Caco-2 (cell line): ENCODE measurements at regions of chr17 and their contacts with region 1.

Region 1: DNA sequence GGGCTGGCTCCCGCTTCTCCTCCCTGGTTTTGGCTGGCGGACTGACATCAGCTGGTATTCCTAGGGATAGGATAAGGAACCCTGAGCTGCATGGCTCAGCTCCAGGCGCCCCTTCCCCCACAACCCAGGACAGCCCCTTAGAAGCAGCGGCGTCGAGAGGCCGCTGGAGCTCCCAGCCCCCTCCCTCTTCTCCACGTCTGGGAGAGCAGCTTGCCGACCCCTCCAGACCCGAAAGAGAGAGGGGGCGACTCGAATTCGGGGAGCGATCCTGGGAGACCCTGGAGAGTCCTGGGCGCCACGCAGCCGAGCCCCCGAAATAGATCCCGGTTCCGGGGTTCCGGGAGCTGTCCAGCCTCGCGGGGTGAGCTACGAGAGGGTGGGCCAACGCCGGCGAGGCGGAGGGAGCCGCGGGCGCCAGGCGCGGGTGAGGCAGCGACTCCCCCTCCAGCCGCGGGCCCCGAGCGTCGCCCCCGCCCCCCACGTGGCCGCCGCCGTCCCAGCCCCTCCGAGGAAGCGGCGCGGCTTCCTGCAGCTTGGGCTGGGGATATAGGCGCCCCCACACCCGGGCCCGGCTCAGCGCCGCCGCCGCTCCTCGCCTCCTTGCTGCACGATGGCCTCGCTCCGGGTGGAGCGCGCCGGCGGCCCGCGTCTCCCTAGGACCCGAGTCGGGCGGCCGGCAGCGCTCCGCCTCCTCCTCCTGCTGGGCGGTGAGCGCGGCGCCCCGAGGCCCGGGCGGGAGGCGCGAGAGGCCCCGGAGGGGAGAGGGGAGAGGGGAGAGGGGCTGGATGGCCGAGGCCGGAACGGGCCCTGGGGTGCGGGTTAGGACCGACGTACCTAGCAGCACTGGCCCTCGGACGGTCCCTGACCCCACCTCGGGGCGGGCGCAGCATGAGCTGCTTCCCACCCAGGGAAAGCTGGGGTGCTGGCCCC is at the start of gene RAMP2:
- DNase-seq: peak; percentile 49 to 72
- H3K4me3 ChIP-seq: peak within 1 kb of the TSS; percentile 68
- H3K4me3 Mint-ChIP-seq: peak within 1 kb of the TSS; percentile 65
- H3K27ac Mint-ChIP-seq: peak within 1 kb of the TSS; percentile 56
- H3K4me1 ChIP-seq: peaks cover 28% of the 10 kb centered on the region
- H3K4me1 Mint-ChIP-seq: peaks cover 19% of the 10 kb centered on the region
- H3K27me3 ChIP-seq: no peaks in the 10 kb centered on the region
- H3K27me3 Mint-ChIP-seq: no peaks in the 10 kb centered on the region
- CTCF ChIP-seq: no peak
- total RNA-seq, gene RAMP2: 21.4 and 24.3 TPM in 2 replicates

Region 2: GRCh38 chr17:42577532-42578281 is 183.2 kb before region 1 on chr17 and contains the start of gene PSMC3IP:
- CTCF ChIA-PET with region 1: interaction called, 27 read pairs
- POLR2A ChIA-PET with region 1: interaction called, 4 read pairs
- intact Hi-C with region 1: loop called (anchors 5 kb)
- DNase-seq: peak; percentile 95 to 97
- H3K4me3 ChIP-seq: peak within 1 kb of the TSS; percentile 82
- H3K4me3 Mint-ChIP-seq: peak within 1 kb of the TSS; percentile 80
- H3K27ac Mint-ChIP-seq: peak within 1 kb of the TSS; percentile 84
- H3K4me1 ChIP-seq: peaks cover 4% of the 10 kb centered on the region
- H3K4me1 Mint-ChIP-seq: peaks cover 23% of the 10 kb centered on the region
- H3K27me3 ChIP-seq: no peaks in the 10 kb centered on the region
- H3K27me3 Mint-ChIP-seq: no peaks in the 10 kb centered on the region
- CTCF ChIP-seq: peak; percentile 59 to 64
- total RNA-seq, gene PSMC3IP: 24.7 and 25.2 TPM in 2 replicates

Region 3: DNA sequence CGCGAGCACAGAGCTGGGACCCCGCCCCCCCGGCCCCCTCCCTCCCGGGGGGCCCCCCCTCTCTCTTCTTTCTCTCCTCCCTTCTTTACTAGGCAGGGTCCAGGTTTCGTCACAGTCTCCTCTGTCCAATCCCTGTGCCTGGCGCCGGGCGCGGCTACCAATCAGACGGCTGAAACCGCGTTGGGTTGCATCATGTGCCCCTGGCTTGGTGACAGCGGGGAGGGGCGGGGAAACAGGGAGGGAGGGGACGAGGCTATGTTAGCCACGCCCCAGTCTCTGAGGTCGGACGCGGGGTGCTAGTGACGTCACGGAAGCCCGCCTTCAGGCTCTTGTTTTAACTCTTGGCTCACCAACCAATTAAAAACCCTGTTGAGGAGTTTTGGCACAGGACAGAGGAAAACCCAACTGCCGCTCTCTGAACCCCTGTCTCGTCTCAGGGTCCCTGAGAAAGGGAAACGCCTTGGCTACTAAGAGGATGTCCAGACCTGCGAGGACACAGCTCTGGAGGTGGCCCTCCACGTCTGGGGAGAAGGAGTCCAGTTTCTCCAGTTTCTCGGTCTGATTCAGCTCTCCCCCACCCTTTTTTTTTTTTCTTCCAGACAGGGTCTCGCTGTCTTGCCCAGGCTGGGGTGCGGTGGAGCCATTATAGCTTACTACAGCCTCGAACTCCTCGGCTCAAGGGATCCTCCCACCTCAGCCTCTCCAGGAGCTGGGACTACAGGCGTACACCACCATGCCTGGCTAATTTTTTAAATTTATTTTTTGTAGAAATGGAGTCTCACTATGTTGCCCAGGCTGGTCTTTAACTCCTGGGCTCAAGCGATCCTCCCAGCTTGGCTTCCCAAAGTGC is 83.7 kb before region 1 on chr17:
- CTCF ChIA-PET with region 1: interaction called, 5 read pairs
- POLR2A ChIA-PET with region 1: interaction called, 4 read pairs
- intact Hi-C with region 1: loop called (anchors 5 kb)
- DNase-seq: peak; percentile 99 to 100
- H3K4me3 ChIP-seq: peak overlapping the region; percentile 85
- H3K4me3 Mint-ChIP-seq: peak overlapping the region; percentile 89
- H3K27ac Mint-ChIP-seq: peak overlapping the region; percentile 95
- H3K4me1 ChIP-seq: peaks cover 26% of the 10 kb centered on the region
- H3K4me1 Mint-ChIP-seq: peaks cover 8% of the 10 kb centered on the region
- H3K27me3 ChIP-seq: no peaks in the 10 kb centered on the region
- H3K27me3 Mint-ChIP-seq: no peaks in the 10 kb centered on the region
- CTCF ChIP-seq: no peak

Region 4: GRCh38 chr17:42744806-42745617 is 15.9 kb before region 1 on chr17 and contains the start of gene EZH1:
- CTCF ChIA-PET with region 1: interaction called, 13 read pairs
- POLR2A ChIA-PET with region 1: interaction called, 3 read pairs
- intact Hi-C with region 1: loop called (anchors 1 kb)
- DNase-seq: peak; percentile 93 to 97
- H3K4me3 ChIP-seq: peak within 1 kb of the TSS; percentile 63
- H3K4me3 Mint-ChIP-seq: peak within 1 kb of the TSS; percentile 92
- H3K27ac Mint-ChIP-seq: peak within 1 kb of the TSS; percentile 64
- H3K4me1 ChIP-seq: peaks cover 23% of the 10 kb centered on the region
- H3K4me1 Mint-ChIP-seq: peaks cover 39% of the 10 kb centered on the region
- H3K27me3 ChIP-seq: no peaks in the 10 kb centered on the region
- H3K27me3 Mint-ChIP-seq: peaks cover 3% of the 10 kb centered on the region
- CTCF ChIP-seq: no peak
- total RNA-seq, gene EZH1: 16.9 and 18.0 TPM in 2 replicates

Region 5: DNA sequence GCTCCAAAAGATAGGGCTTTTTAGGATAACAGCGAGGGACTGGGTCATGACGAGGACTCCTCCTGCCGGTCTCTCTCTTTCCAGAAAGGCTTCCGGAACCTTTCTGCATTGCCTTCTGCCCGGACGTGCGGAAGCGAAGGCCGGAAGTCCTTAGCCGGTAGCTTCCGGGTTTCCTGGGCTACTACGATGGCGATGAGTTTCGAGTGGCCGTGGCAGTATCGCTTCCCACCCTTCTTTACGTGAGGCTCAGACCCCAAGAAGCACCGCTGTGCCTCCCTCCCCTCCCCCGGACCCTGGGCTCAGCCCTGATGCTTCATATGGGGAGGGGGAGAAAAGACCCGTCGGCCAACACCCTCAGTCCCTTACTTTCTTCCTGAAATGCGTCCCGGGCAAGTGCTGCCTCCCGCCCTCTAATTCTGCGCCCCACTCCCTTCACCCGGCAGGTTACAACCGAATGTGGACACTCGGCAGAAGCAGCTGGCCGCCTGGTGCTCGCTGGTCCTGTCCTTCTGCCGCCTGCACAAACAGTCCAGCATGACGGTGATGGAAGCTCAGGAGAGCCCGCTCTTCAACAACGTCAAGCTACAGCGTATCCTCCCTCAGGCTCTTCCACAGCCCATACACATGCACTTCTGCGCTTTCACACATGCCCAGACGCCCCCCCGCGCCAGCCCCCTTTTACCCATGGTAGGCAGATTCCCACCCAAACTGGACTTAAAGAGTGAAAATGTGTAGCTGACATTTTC is 12.5 kb after region 1 on chr17 and contains the start of gene VPS25:
- CTCF ChIA-PET with region 1: interaction called, 18 read pairs
- POLR2A ChIA-PET with region 1: interaction called, 7 read pairs
- intact Hi-C with region 1: no loop called
- DNase-seq: peak; percentile 84 to 86
- H3K4me3 ChIP-seq: peak within 1 kb of the TSS; percentile 77
- H3K4me3 Mint-ChIP-seq: peak within 1 kb of the TSS; percentile 96
- H3K27ac Mint-ChIP-seq: peak within 1 kb of the TSS; percentile 93
- H3K4me1 ChIP-seq: 0 out of 2 replicates have a peak, but pooled peaks cover 3% of the 10 kb centered on the region
- H3K4me1 Mint-ChIP-seq: no peaks in the 10 kb centered on the region
- H3K27me3 ChIP-seq: no peaks in the 10 kb centered on the region
- H3K27me3 Mint-ChIP-seq: no peaks in the 10 kb centered on the region
- CTCF ChIP-seq: no peak
- total RNA-seq, gene VPS25: 96.0 and 103 TPM in 2 replicates

Region 6: DNA sequence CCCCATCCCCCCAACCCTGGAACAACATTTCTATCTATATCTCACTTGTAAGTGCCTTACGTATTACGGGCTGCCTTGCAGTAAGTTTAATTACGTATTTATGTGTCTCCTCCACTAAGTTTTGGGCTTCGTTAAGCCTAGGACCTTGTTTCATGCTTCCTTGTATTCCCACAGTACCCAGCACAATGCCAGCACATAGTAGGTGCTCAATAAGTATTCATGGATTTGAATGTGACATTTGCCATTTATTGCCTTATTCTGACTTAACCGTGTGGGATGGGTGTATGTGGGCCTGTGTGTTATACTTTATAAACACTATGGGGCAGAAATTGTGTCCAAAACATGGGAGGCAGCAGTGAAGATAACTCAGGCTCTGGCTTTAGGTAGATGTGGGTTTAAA is 31.6 kb after region 1 on chr17:
- CTCF ChIA-PET with region 1: no interaction called
- POLR2A ChIA-PET with region 1: no interaction called
- intact Hi-C with region 1: no loop called
- DNase-seq: no peak
- H3K4me3 ChIP-seq: no peak overlapping the region
- H3K4me3 Mint-ChIP-seq: no peak overlapping the region
- H3K27ac Mint-ChIP-seq: no peak overlapping the region
- H3K4me1 ChIP-seq: peaks cover 6% of the 10 kb centered on the region
- H3K4me1 Mint-ChIP-seq: no peaks in the 10 kb centered on the region
- H3K27me3 ChIP-seq: no peaks in the 10 kb centered on the region
- H3K27me3 Mint-ChIP-seq: no peaks in the 10 kb centered on the region
- CTCF ChIP-seq: no peak